ENCODE measurements at regions of chr6 and their contacts with region 1.

Region 1: DNA sequence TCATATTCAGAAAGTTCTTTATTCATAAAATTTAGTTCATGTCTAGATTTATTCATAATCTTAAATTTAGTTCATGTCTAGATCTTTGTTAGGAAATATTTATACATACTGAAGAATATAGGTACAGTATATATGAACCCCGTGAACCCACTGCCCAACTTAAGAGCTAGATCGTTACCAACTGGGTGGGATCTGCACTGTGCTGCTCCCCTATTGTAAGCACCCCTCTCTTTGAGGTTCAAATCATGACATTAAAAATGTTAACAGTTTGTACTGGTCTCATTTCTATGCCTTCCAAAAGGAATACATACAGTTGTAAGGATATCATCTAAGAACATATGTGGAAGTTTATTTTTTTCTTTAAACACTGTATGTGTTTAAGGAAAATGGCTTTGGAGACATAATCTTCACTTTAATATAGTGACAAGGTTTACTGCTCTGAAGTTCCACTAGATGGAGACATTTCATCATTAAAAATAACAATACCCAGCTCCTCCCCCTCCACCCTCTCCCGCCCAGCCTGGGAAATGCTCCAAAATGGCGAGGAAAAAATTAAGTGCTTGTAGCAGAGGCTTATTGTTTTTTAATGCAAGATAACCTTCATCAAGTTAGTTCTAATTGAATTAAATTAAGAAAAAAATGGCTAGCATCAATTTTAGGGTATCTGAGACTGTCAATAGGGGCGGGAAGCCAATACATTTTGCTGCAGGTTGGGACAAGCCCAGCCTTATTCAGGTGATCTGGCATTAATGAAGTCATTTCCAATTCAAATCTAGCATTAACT is 104.1 kb upstream of the TRAF3IP2 start:
- DNase-seq: peak; percentile 65 to 79 (median 75)
- ATAC-seq: peak; percentile 76 to 84
- H3K4me3 ChIP-seq: no peak overlapping the region
- H3K27ac ChIP-seq: peak overlapping the region; percentile 76
- H3K4me1 ChIP-seq: peaks cover 9% of the 10 kb centered on the region
- H3K27me3 ChIP-seq: no peaks in the 10 kb centered on the region

Region 2: DNA sequence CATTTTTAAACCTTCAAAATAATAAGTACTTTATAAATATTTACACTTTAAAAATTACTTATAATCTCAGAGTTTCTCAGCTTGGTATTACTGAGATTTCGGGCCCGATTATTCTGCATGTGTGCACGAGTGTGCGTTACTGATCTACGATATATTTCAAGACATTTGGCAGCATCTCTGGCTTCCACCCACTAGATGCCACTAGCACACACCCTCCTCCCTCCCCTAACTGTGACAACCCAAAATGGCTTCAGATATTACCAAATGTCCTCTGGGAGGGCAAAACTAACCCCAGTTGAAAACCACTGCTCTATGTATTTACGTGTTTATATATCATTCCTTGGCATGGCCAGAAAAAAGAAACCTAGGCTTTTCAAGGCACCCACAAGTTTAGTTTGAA is 67.5 kb after region 1 on chr6:
- intact Hi-C with region 1: loop called in 1 of 4 experiments (anchors 10 kb)
- DNase-seq: no peak
- ATAC-seq: peak in 1 of 2 donors; percentile 32
- H3K4me3 ChIP-seq: no peak overlapping the region
- H3K27ac ChIP-seq: no peak overlapping the region
- H3K4me1 ChIP-seq: peaks cover 14% of the 10 kb centered on the region
- H3K27me3 ChIP-seq: no peaks in the 10 kb centered on the region

Region 3: GRCh38 chr6:111997078-111997852 is 287.5 kb after region 1 on chr6:
- intact Hi-C with region 1: loop called (anchors 2 to 5 kb)
- DNase-seq: peak; percentile 85 to 91 (median 91)
- ATAC-seq: peak; percentile 93
- H3K4me3 ChIP-seq: no peak overlapping the region
- H3K27ac ChIP-seq: peak overlapping the region; percentile 28
- H3K4me1 ChIP-seq: no peaks in the 10 kb centered on the region
- H3K27me3 ChIP-seq: no peaks in the 10 kb centered on the region

Region 4: GRCh38 chr6:112043032-112044007 is 333.5 kb after region 1 on chr6:
- intact Hi-C with region 1: loop called in 3 of 4 experiments (anchors 2 to 10 kb)
- DNase-seq: peak; percentile 88 to 94 (median 94)
- ATAC-seq: peak; percentile 96
- H3K4me3 ChIP-seq: peak overlapping the region; percentile 85
- H3K27ac ChIP-seq: peak overlapping the region; percentile 57
- H3K4me1 ChIP-seq: no peaks in the 10 kb centered on the region
- H3K27me3 ChIP-seq: no peaks in the 10 kb centered on the region